Transverse colon (tissue), 4 donors: ENCODE measurements at regions of chr2 and their contacts with region 1.

Region 1: DNA sequence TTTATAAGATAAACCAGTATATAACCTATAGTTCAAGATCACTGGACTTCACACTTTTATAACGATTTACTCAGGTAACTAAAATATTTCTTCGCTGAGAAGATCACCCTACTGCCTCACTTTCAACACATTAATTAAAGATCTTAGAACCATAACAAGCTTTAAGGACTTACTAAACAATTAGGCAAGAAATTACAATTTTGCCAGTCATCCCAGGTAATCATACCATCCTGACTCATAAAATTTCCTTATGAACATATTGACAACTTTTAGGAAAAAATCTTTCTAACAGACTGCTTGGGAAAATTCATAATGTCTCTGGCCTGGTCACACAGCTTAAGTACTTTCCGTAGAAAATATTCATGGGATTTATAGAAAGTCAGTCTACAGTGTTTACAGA is 223.2 kb downstream of the NRXN1 start:
- DNase-seq: no peak
- H3K4me3 ChIP-seq: no peak overlapping the region
- H3K27ac ChIP-seq: no peak overlapping the region
- H3K4me1 ChIP-seq: no peaks in the 10 kb centered on the region
- H3K27me3 ChIP-seq: no peaks in the 10 kb centered on the region
- CTCF ChIP-seq: no peak
- EP300 ChIP-seq: no peak
- POLR2A ChIP-seq: no peak

Region 2: DNA sequence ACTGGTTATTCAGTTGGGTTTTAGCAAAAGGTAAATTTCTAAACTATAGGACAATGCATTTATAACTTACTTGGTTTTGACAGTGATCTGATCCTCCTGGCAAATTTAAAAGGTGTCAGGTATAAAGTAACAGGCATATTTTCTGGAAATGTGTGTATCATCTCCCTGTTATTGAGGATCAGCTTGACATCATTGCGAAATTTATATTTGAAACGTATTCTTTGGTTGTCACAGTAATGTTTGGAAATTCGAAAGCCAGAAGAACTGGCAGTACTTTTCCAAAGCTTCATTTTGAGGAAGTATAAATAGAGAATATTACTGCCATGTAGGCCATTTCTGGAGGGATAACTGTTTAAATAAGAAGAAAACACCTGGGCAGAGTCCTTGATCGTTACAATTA is 645.5 kb after region 1 on chr2:
- in situ Hi-C with region 1: no loop called
- intact Hi-C with region 1: loop called (anchors 5 kb)
- DNase-seq: no peak
- H3K4me3 ChIP-seq: no peak overlapping the region
- H3K27ac ChIP-seq: no peak overlapping the region
- H3K4me1 ChIP-seq: no peaks in the 10 kb centered on the region
- H3K27me3 ChIP-seq: no peaks in the 10 kb centered on the region
- CTCF ChIP-seq: no peak
- EP300 ChIP-seq: no peak
- POLR2A ChIP-seq: no peak